ENCODE measurements at regions of chr6 and their contacts with region 1.

Region 1: GRCh38 chr6:37029249-37029971 is 24.0 kb downstream of the FGD2 start:
- DNase-seq: peak; percentile 67
- H3K4me3 Mint-ChIP-seq: no peak overlapping the region
- H3K27ac Mint-ChIP-seq: peak overlapping the region; percentile 26
- H3K4me1 Mint-ChIP-seq: peaks cover 46% of the 10 kb centered on the region
- H3K27me3 Mint-ChIP-seq: no peaks in the 10 kb centered on the region

Region 2: DNA sequence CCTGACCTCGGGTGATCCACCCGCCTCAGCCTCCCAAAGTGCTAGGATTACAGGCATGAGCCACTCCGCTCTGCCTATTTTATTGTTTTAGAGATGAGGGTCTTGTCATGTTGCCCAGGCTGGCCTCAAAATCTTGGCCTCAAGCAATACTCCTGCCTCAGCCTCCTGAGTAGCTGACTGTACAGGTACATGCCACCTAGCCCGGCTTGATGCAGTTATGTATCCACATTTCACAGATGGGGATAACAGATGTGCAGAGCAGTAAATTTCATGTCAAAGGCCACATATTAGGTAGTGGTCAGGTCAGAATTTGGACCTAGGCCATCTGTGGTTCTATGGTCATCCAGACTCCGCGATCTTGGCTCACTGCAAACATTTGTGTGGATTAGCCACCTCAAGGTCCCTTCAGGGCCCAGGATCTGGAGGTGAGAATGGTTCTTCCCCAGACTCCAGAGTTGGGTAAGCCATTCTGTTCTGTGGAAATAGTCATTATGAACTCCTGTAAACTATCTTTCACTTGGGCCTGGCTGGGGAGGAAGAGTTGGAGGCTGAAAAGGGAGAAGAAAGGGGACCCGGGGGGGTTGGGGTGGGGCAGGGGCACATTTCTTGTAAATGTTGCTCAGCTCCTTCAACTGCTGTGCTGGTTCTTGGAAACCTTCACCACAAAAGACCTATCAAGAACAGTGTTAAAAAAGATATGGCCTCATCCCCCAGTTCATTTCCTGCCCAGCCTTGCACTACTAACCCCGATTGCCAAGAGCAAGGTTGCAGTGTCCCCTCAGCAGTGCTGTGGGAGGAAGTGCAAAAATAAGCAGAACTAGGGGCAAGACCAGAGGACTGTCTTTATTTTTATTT is 153.6 kb after region 1 on chr6:
- CTCF ChIA-PET with region 1: interaction called, 11 read pairs
- intact Hi-C with region 1: no loop called
- DNase-seq: peak; percentile 83
- H3K4me3 Mint-ChIP-seq: peak overlapping the region; percentile 34
- H3K27ac Mint-ChIP-seq: peak overlapping the region; percentile 95
- H3K4me1 Mint-ChIP-seq: peaks cover 59% of the 10 kb centered on the region
- H3K27me3 Mint-ChIP-seq: no peaks in the 10 kb centered on the region